ENCODE measurements at regions of chr11 and their contacts with region 1.

Region 1: GRCh38 chr11:113618360-113618759 is 87.7 kb downstream of the TMPRSS5 start:
- DNase-seq: no peak
- ATAC-seq: no peak
- H3K4me3 Mint-ChIP-seq: no peak overlapping the region
- H3K27ac Mint-ChIP-seq: no peak overlapping the region
- H3K4me1 Mint-ChIP-seq: peaks cover 4% of the 10 kb centered on the region
- H3K27me3 Mint-ChIP-seq: 0 out of 2 replicates have a peak, but pooled peaks cover 3% of the 10 kb centered on the region
- CTCF ChIP-seq: no peak

Region 2: GRCh38 chr11:113305440-113306336 is 312.7 kb before region 1 on chr11:
- CTCF ChIA-PET with region 1: no interaction called
- POLR2A ChIA-PET with region 1: no interaction called
- DNase-seq: peak; percentile 83
- ATAC-seq: peak; percentile 97
- H3K4me3 Mint-ChIP-seq: no peak overlapping the region
- H3K27ac Mint-ChIP-seq: no peak overlapping the region
- H3K4me1 Mint-ChIP-seq: peaks cover 5% of the 10 kb centered on the region
- H3K27me3 Mint-ChIP-seq: no peaks in the 10 kb centered on the region
- CTCF ChIP-seq: peak; percentile 78

Region 3: DNA sequence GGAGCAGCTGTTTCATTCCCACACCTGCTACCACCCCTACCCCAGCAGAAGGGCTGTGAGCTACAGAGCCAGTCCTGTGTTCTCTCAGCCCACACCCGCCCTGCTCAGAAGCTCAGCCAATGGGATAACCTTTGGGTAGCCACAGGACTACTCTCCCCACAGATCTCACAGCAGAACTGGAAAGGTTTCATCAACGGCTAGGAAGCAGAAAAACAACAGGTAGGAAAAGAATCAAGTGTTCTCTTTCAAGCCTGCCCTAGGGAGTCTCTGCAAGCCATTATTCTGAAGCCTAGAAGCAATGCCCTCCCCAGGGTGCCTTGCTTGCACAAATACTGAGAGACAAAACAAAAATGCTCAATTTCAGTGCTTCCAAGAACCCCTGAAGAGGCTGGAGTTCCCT is 10.6 kb after region 1 on chr11:
- CTCF ChIA-PET with region 1: interaction called, 3 read pairs
- POLR2A ChIA-PET with region 1: interaction called, 10 read pairs
- DNase-seq: peak; percentile 54
- ATAC-seq: peak; percentile 99
- H3K4me3 Mint-ChIP-seq: no peak overlapping the region
- H3K27ac Mint-ChIP-seq: peak overlapping the region; percentile 88
- H3K4me1 Mint-ChIP-seq: peaks cover 41% of the 10 kb centered on the region
- H3K27me3 Mint-ChIP-seq: peaks cover 63% of the 10 kb centered on the region
- CTCF ChIP-seq: no peak

Measured in WTC11 (cell line).